Transverse colon (tissue), 4 donors: ENCODE measurements at regions of chr4 and their contacts with region 1.

Region 1: DNA sequence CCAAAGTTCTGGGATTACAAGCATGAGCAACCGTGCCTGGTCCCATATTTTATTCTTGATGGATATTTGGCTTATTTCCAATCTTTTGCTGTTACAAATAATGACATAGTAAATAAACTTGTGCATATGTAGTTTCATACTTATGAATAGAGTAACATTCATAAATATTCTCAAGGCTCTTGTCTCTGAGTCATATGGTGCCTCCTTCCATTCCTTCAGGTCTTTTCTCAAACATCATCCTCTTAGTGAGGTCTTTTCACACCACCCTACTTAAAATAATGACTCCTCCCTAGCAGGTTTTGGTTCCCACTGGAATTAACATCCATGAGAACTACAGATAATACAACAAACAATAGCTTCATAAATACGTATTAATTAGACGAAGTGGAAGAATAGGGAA is 416.6 kb downstream of the IQCM start:
- DNase-seq: no peak
- H3K4me3 ChIP-seq: no peak overlapping the region
- H3K27ac ChIP-seq: no peak overlapping the region
- H3K4me1 ChIP-seq: peaks cover 0 to 2% (median 0%) of the 10 kb centered on the region in 4 donors
- H3K27me3 ChIP-seq: no peaks in the 10 kb centered on the region
- CTCF ChIP-seq: no peak
- EP300 ChIP-seq: no peak
- POLR2A ChIP-seq: no peak

Region 2: GRCh38 chr4:149897783-149898182 is 498.8 kb after region 1 on chr4:
- in situ Hi-C with region 1: loop called in 1 of 4 experiments (anchors 25 kb)
- intact Hi-C with region 1: no loop called
- DNase-seq: no peak
- H3K4me3 ChIP-seq: no peak overlapping the region
- H3K27ac ChIP-seq: peak overlapping the region in 1 of 4 donors; percentile 82
- H3K4me1 ChIP-seq: peaks cover 0 to 47% (median 12%) of the 10 kb centered on the region in 4 donors
- H3K27me3 ChIP-seq: no peaks in the 10 kb centered on the region
- CTCF ChIP-seq: peak in 4 of 5 experiments; percentile 36 to 48 (median 42)
- EP300 ChIP-seq: no peak
- POLR2A ChIP-seq: no peak